Activated naive CD4-positive, alpha-beta T cell treated with anti-CD3 and anti-CD28 coated beads, Interleukin-2, amount 10 ng/mL, durations not matched to agents 7 days and 5 days (primary cell): ENCODE measurements at regions of chr7 and their contacts with region 1.

Region 1: DNA sequence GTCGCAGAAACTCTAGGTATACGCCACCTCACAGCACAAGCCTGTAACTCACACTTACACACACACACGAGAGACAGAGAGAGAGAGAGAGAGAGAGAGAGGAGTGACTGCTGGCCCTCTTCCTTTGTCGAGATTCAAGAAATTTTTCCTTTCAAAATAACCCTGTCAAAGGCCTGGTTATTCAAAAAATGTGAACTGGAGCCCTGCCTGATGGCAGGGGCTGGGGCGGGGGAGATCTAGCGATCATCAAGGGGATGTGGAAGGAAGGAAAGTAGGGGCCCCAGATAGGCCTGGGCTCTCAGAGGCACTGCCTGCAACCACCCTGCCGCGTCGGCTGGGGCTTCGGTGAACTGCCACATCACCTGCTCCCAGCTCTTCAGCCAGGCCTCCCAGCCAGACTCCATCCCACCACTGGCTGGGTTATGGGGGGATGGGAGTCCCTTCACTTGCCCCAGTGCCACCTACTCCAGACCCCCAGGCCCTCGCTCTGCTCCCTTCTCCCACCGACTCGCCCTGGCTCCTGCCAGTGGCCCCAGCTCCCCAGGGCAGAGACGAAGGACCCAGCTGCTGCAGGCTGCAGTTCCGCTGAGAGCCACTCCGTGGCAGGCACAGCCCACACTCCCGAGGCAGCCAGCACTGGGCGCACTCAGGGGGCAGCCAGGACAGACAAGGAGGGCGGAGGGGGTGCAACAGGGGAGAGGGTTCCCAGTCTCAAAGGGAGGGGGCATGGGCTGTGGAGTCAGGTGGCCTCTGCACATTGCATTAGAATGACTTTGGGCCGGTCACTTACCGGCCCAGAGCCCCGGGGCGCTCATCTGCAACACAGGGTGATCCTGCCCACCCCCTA is 15.3 kb downstream of the KCNH2 start:
- DNase-seq: peak; percentile 77
- H3K4me3 Mint-ChIP-seq: no peak overlapping the region
- H3K27ac Mint-ChIP-seq: no peak overlapping the region
- H3K4me1 Mint-ChIP-seq: peaks cover 18% of the 10 kb centered on the region
- H3K27me3 Mint-ChIP-seq: peaks cover 72% of the 10 kb centered on the region

Region 2: GRCh38 chr7:150988230-150989226 is 25.8 kb after region 1 on chr7:
- CTCF ChIA-PET with region 1: interaction called, 91 read pairs
- DNase-seq: peak; percentile 81
- H3K4me3 Mint-ChIP-seq: peak overlapping the region; percentile 54
- H3K27ac Mint-ChIP-seq: no peak overlapping the region
- H3K4me1 Mint-ChIP-seq: peaks cover 45% of the 10 kb centered on the region
- H3K27me3 Mint-ChIP-seq: peaks cover 66% of the 10 kb centered on the region

Region 3: GRCh38 chr7:151008511-151009323 is 45.9 kb after region 1 on chr7:
- CTCF ChIA-PET with region 1: interaction called, 15 read pairs
- DNase-seq: peak; percentile 72
- H3K4me3 Mint-ChIP-seq: peak overlapping the region; percentile 65
- H3K27ac Mint-ChIP-seq: peak overlapping the region; percentile 90
- H3K4me1 Mint-ChIP-seq: peaks cover 71% of the 10 kb centered on the region
- H3K27me3 Mint-ChIP-seq: no peaks in the 10 kb centered on the region

Region 4: DNA sequence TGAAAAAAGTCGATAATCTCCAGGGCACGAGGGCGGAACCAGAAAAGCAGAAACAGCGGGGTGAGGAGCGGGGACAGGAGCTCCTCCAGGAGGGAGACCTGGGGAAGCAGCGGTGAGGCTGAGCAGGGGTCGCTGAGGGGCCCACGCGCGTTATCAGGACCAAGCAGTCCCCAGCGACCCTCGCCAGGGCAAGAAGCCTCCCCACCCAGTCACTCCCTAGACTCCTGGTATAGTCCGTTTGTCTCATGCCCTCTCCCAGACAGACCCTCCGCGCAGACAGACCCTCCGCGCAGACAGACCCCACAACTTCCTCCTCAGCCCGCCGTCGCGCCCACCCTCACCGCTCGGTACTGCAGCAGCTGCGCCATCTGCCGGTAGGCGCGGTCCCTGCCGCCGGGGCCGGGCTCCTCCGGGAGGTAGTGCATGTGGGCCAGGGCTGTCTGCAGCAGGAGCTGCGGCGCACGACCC is 55.2 kb after region 1 on chr7:
- CTCF ChIA-PET with region 1: interaction called, 47 read pairs
- DNase-seq: peak; percentile 86
- H3K4me3 Mint-ChIP-seq: peak overlapping the region; percentile 74
- H3K27ac Mint-ChIP-seq: peak overlapping the region; percentile 68
- H3K4me1 Mint-ChIP-seq: peaks cover 68% of the 10 kb centered on the region
- H3K27me3 Mint-ChIP-seq: peaks cover 51% of the 10 kb centered on the region

Region 5: DNA sequence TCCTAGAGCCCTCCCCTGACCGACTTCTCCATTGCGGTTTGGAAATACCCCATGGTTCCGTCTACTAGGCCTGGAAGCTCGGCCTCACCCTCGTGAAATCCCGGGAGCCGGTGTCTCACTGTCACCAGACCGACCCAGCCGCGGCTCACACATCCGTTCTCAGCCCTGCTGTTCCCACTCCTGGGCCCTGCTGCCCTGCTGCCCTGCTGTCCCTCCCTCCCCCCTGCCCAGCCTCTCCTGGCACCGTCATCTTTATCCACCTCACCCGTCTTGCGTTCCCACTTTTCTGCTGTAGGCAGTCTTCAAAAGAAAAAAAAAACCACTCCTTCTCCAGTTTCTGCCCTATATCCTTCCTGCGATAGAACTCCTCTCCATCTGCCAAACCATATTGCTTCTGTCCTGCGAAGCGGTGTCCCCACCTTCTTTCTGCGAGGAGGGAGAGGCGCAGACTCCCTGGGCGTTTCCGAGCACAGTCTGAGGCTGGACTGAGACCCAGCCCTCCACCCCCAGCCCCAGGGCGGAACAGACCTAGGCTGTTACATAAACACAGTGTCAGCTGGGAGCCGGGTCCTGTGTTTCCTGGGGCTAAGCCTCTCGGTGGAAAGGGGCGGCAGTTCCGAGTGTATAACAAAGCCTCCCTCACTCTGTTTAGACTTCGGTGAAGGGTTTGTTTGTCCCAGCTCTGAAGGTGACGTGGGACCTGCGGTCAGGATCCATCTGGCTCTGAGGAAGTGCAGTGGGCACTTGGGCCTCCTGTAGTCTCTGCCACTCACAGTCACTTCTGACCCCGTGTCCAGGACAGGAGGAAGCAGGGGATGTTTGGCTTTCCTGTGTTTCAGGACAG is 126.3 kb after region 1 on chr7:
- CTCF ChIA-PET with region 1: interaction called, 10 read pairs
- DNase-seq: no peak
- H3K4me3 Mint-ChIP-seq: peak overlapping the region; percentile 0
- H3K27ac Mint-ChIP-seq: peak overlapping the region; percentile 1
- H3K4me1 Mint-ChIP-seq: peaks cover 28% of the 10 kb centered on the region
- H3K27me3 Mint-ChIP-seq: peaks cover 62% of the 10 kb centered on the region

Region 6: DNA sequence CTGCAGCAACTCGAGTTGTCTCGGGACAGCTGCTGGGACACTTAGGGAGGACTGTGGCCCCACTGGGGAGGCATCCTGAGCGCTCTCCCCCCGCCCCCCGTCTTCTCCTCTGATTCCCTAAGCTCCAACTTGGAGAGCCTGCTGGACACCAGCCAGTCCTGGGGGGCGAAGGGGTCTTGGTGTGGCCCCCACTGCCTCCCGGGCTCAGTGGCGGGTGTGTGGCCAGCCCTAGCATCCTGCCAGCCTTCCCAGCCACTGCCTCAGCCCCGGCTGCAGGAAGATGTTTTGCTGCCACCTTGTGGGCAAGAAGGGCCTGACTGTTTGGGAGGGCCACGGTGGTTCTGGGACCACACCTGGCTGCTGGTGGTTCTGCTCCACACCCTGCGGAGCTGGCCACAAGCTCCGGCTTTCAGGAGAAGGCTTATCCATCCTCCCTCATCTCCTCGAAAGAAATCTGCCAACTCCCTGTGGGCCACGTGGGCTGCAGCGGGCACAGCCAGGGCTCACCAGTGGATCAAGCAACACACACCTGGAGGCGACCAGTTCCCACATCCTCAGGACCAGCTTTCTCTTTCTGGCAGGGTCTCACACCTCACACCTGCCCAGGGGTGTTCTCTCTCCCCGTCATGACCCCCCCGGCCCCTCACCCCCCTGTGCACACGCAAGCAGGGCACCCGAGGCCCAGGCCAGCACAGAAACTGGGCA is 148.3 kb after region 1 on chr7:
- CTCF ChIA-PET with region 1: interaction called, 37 read pairs
- DNase-seq: peak; percentile 85
- H3K4me3 Mint-ChIP-seq: no peak overlapping the region
- H3K27ac Mint-ChIP-seq: peak overlapping the region; percentile 45
- H3K4me1 Mint-ChIP-seq: peaks cover 8% of the 10 kb centered on the region
- H3K27me3 Mint-ChIP-seq: peaks cover 51% of the 10 kb centered on the region